H1 (cell line): ENCODE measurements at regions of chr7 and their contacts with region 1.

Region 1: DNA sequence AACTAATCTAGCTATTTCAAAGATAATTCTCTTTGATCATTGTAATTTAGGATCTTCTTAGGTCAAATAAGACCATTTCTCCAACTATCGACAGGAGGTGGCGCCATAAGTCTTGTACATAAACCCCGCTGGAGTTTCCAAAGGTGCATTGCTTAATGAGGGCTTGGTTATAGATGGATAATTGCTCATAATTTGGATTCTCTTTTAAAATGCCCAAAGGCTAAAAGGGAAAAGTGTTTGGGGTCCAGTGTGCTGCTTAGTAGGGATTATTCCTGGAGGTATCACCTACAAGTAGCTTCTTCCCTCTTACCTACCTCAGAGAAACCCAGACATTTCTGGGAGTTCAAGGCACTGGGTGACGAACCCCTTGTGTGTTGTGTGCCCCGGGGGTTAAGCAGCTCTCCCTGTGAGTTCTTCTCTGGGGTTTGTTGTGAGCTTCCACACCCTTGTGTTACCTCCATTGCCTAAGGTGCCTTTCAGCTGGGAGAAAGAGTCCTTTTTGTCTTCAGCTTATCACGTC is 75.2 kb downstream of the PAXIP1 start:
- DNase-seq: peak in 1 of 2 experiments; percentile 69
- H3K4me3 ChIP-seq: no peak overlapping the region
- H3K27ac ChIP-seq: no peak overlapping the region
- H3K4me1 ChIP-seq: peaks cover 0 to 6% (median 4%) of the 10 kb centered on the region in 4 experiments; a peak in 5 of 7 replicates
- H3K27me3 ChIP-seq: no peaks in the 10 kb centered on the region
- CTCF ChIP-seq: peak in 2 of 3 experiments; percentile 46 to 60; a peak in 3 of 4 replicates
- EP300 ChIP-seq: no peak
- POLR2A ChIP-seq: no peak
- RAD21 ChIP-seq: peak; percentile 81 to 87

Region 2: GRCh38 chr7:154879629-154880028 is 48.1 kb before region 1 on chr7:
- CTCF ChIA-PET with region 1: no interaction called
- POLR2A ChIA-PET with region 1: no interaction called
- DNase-seq: no peak
- H3K4me3 ChIP-seq: no peak overlapping the region
- H3K27ac ChIP-seq: no peak overlapping the region
- H3K4me1 ChIP-seq: no peaks in the 10 kb centered on the region
- H3K27me3 ChIP-seq: no peaks in the 10 kb centered on the region
- CTCF ChIP-seq: no peak
- EP300 ChIP-seq: no peak
- POLR2A ChIP-seq: no peak
- RAD21 ChIP-seq: no peak

Region 3: DNA sequence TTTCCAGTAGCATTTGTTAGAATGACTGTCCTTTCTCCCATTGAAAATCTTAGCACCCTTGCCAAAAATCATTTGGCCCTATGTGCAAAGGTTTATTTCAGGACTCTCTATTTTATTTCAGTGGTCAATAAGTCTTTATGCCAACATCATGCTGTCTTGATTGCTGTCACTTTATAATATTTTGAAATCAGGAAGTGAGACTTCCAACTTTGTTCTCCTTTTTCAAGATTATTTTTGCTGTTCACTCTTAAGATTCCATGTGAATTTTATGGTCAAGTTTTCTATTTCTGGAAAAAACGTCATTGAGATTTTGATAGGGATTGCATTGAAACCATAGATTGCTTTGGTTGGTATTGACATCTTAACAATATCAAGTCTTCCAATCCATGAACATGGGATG is 10.2 kb after region 1 on chr7:
- CTCF ChIA-PET with region 1: interaction called, 21 read pairs
- POLR2A ChIA-PET with region 1: no interaction called
- DNase-seq: no peak
- H3K4me3 ChIP-seq: no peak overlapping the region
- H3K27ac ChIP-seq: no peak overlapping the region
- H3K4me1 ChIP-seq: no peaks in the 10 kb centered on the region
- H3K27me3 ChIP-seq: no peaks in the 10 kb centered on the region
- CTCF ChIP-seq: no peak
- EP300 ChIP-seq: no peak
- POLR2A ChIP-seq: no peak
- RAD21 ChIP-seq: no peak

Region 4: GRCh38 chr7:154953006-154953684 is 25.5 kb after region 1 on chr7:
- CTCF ChIA-PET with region 1: interaction called, 40 read pairs
- POLR2A ChIA-PET with region 1: interaction called, 4 read pairs
- DNase-seq: peak; percentile 71 to 90
- H3K4me3 ChIP-seq: no peak overlapping the region
- H3K27ac ChIP-seq: no peak overlapping the region; the same call in 1 of the 2 replicates
- H3K4me1 ChIP-seq: no peaks in the 10 kb centered on the region
- H3K27me3 ChIP-seq: no peaks in the 10 kb centered on the region
- CTCF ChIP-seq: peak; percentile 81 to 89 (median 83)
- EP300 ChIP-seq: no peak
- POLR2A ChIP-seq: no peak
- RAD21 ChIP-seq: peak; percentile 55 to 65

Region 5: DNA sequence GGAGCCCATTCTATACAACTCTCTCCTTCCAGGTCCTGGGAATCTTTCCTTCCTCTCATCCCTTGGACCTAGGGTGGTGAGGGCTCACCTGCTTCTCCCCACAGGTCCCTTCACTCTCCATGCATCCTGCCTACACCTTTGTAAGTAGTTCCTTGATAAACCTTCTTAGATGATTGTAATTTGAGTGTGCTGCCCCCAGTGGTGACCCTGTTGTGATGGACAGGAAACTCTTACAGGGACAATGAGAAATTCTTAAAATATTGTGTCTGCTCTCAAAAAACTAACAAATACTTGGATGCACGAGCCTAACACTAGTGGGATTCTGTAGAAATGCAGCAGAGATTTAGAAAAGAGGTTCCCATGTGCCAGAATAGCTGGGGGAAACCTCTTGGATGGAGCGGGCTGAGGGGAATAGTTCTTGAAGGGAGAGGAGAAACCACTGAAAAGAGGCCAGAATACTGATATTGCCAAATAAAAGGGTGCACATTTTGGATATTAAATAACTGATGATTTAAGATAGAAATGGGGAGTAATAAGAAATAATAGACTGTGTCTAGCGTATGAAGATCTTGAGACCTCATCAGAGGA is 82.0 kb after region 1 on chr7:
- CTCF ChIA-PET with region 1: interaction called, 15 read pairs
- POLR2A ChIA-PET with region 1: no interaction called
- DNase-seq: no peak
- H3K4me3 ChIP-seq: no peak overlapping the region
- H3K27ac ChIP-seq: no peak overlapping the region
- H3K4me1 ChIP-seq: no peaks in the 10 kb centered on the region
- H3K27me3 ChIP-seq: no peaks in the 10 kb centered on the region
- CTCF ChIP-seq: peak in 2 of 3 experiments; percentile 29 to 54; a peak in 2 of 4 replicates
- EP300 ChIP-seq: no peak
- POLR2A ChIP-seq: no peak
- RAD21 ChIP-seq: no peak; a peak in 1 of 4 replicates

Region 6: DNA sequence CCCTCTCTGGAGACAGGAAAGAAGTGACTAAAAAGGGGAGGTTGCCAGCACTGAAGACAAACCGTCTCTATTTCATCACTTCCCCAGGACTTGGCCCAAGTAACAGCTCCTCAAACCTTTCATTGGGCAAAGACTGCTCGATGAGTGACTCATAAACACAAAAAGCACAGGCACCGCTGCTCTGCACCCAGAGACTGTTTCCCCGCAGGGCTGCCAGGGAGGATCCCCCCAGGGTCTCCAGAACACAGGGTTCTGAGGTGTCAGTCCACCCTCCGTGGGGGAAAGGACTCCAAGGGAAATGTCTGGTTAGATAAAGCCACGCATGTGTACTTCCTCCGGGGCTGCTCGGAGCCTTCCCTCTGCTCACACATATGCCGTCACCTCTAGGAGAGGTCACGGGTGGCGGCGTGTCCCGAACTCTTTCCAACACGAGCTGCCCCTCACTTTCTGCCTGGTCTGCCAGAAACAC is 429.9 kb after region 1 on chr7:
- CTCF ChIA-PET with region 1: interaction called, 11 read pairs
- POLR2A ChIA-PET with region 1: no interaction called
- DNase-seq: no peak
- H3K4me3 ChIP-seq: no peak overlapping the region
- H3K27ac ChIP-seq: no peak overlapping the region
- H3K4me1 ChIP-seq: no peaks in the 10 kb centered on the region; a peak in 1 of 7 replicates
- H3K27me3 ChIP-seq: no peaks in the 10 kb centered on the region; a peak in 2 of 7 replicates
- CTCF ChIP-seq: no peak
- EP300 ChIP-seq: no peak
- POLR2A ChIP-seq: no peak
- RAD21 ChIP-seq: no peak